MCF 10A (cell line): ENCODE measurements at regions of chr15 and their contacts with region 1.

Region 1: GRCh38 chr15:90436952-90437351 is 48.9 kb downstream of the IQGAP1 start:
- DNase-seq: no peak
- H3K4me3 Mint-ChIP-seq: no peak overlapping the region
- H3K27ac Mint-ChIP-seq: no peak overlapping the region
- H3K4me1 Mint-ChIP-seq: peaks cover 20% of the 10 kb centered on the region
- H3K27me3 Mint-ChIP-seq: no peaks in the 10 kb centered on the region
- CTCF ChIP-seq: no peak

Region 2: DNA sequence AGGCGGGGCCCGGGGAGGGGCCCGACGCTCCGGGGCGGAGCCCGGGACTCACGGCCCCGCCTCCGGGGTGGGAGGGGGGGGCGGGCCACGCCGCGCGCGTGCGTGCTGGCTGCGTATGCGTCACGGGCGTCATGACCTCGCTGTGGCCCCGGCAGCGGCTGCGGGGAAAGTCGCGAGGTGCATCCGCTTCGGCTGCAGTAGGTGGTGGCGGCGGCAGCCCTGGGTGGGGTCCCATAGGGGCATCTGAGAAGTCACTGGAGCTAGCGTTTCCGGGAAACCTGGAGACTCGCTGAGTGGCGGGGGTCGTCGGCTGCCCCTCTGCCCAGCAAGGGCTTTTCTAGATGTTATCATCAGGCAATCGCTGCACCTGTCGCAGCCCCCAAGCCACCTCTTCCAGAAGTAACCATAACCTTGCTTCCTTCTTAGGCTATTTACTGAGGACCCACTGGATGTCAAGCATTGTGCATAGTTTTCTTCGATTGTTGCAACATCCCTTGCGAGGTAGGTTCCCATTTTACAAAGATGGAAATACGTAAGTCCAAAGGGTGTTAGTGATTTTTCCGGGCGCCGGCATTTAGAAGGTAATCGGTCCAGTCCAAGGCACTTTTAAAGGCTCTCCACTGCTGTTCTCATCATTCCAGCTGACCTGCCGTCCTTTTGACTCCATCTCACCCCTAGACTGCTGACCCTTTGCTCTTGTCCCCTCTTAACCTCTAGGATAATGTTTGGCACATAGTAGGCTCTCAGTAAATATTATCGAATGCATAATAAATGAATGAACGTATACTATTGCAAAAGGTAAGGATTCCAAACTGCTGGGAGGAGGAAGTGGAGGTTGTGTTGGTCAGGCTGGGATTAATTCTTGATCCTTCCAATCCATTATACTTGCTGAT is 202.6 kb before region 1 on chr15 and contains the start of gene GDPGP1:
- CTCF ChIA-PET with region 1: no interaction called
- POLR2A ChIA-PET with region 1: no interaction called
- intact Hi-C with region 1: no loop called
- DNase-seq: peak; percentile 33
- H3K4me3 Mint-ChIP-seq: peak within 1 kb of the TSS; percentile 85
- H3K27ac Mint-ChIP-seq: peak within 1 kb of the TSS; percentile 12
- H3K4me1 Mint-ChIP-seq: peaks cover 19% of the 10 kb centered on the region
- H3K27me3 Mint-ChIP-seq: no peaks in the 10 kb centered on the region
- CTCF ChIP-seq: no peak
- total RNA-seq, gene GDPGP1: 3.4 and 6.6 TPM in 2 replicates

Region 3: DNA sequence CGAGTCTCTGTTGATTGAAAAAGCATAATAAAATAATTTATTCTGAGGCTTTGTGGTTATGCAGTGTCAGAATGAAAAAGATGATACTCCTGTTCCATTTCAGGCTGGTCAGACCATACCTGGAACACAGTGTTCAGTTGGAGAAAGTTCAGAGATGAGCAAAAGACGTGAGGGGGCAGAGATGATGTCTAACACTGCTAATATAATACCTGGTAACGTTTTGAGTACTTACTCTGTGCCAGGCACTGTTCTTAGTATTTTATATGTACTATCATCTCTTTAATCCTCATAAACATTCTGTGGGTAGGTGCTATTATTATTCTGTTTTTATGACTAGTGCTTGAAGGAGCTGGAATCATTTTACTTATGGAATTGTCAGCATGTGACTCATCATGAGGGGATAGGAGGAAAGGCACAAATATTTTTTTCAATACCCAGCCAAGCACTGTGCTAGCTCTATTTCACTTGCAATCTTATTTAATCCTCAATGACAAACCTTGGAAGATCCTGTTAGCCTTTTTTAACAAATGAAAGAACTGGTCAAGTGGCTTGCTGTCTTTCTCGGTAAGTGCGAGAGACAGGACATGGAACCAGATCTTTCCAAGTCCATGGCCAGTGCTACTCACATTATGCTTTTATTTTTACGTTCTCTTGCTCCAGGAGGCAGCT is 17.1 kb before region 1 on chr15:
- CTCF ChIA-PET with region 1: interaction called, 5 read pairs
- POLR2A ChIA-PET with region 1: interaction called, 11 read pairs
- intact Hi-C with region 1: no loop called
- DNase-seq: peak; percentile 73
- H3K4me3 Mint-ChIP-seq: peak overlapping the region; percentile 64
- H3K27ac Mint-ChIP-seq: peak overlapping the region; percentile 96
- H3K4me1 Mint-ChIP-seq: peaks cover 26% of the 10 kb centered on the region
- H3K27me3 Mint-ChIP-seq: no peaks in the 10 kb centered on the region
- CTCF ChIP-seq: no peak

Region 4: GRCh38 chr15:91075739-91076138 is 638.8 kb after region 1 on chr15:
- CTCF ChIA-PET with region 1: no interaction called
- POLR2A ChIA-PET with region 1: no interaction called
- intact Hi-C with region 1: no loop called
- DNase-seq: no peak
- H3K4me3 Mint-ChIP-seq: no peak overlapping the region
- H3K27ac Mint-ChIP-seq: no peak overlapping the region
- H3K4me1 Mint-ChIP-seq: no peaks in the 10 kb centered on the region
- H3K27me3 Mint-ChIP-seq: peaks cover 15% of the 10 kb centered on the region
- CTCF ChIP-seq: no peak